Right ventricle myocardium inferior (tissue), 1 donor: ENCODE measurements at regions of chr1 and their contacts with region 1.

Region 1: DNA sequence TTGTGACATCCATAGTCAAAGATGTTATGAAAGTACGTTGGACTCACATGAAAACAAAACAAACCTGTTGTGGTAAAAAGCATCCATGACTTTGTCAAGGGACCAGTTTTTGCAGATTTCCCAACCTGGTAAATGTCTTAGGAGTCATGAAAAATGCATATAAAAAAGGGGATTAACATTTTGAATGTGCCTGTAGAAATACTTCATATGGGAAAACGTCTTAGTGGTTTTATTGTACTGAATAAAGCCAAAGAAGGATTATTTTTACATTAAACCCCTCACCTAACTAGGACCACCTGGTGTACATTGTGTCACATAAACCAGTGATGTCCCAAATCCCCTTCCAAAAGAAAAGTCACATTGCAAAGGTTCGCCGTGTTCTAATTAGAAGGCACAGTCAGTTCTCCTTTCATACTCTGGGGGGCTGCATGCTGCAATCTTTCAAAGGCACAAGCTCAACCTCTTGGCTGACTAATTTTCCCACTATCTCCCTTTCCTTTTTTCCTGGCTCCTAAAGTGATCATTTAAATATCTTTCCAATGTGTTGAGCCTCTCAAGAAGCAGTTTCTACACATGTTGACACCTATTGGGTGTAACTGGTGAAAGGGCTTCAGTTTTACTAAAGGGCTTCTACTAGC is 119.8 kb upstream of the SPAG17 start:
- DNase-seq: no peak
- ATAC-seq: peak; percentile 62

Region 2: GRCh38 chr1:118190561-118190960 is 114.3 kb before region 1 on chr1:
- intact Hi-C with region 1: no loop called
- DNase-seq: no peak
- ATAC-seq: no peak

Region 3: DNA sequence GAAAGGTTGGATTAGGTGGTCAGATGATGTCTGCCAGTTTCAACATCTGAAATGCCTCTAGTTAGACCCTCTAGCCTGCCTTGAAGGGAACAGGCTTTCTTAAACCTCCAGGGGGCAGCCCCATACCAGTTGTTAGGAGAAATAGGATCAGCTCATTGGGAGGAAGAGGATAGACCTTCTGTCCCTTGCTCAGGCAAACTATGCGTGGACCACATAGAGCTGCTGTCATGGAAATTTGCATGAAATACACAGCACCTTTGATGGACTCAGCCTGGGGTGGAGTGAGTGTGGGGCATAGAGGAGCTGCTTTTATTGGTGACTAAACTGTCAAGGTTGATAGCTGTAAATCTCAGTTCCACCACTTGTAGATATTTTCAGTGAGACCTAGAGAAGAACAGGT is 81.4 kb before region 1 on chr1:
- intact Hi-C with region 1: no loop called
- DNase-seq: no peak
- ATAC-seq: peak; percentile 71

Region 4: DNA sequence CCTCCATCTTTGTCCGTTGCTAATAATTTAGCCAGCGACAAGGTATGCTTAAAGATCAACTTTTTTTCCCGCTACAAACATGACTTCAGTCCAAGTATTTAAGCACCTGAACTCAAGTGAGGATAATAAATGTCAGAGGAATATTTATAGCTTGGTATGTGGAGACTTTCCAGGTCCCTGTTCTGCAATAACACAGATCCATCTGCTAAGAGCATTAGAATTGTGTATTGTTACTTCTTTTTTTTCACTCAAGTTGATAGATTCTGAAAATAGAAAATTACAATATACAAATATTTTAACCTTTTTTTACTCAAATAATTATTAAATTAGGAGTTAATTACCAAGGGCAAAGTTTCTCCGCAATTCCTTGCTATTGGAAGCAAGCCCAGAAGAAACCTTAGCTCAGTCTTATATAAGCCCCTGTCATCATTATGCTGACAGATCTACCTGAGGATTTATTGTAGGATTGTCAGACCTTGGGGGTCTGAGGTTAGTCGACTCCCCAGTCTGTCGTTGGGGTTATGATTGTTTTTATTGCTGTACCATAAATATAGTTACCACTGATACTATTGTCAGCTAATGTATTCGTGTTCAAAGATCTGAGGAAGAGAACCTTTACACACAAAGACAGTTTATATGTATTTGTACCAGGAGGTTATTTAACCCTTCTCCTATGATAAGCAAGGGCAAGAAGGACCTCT is 345.4 kb after region 1 on chr1:
- intact Hi-C with region 1: loop called (anchors 5 kb)
- DNase-seq: no peak
- ATAC-seq: peak; percentile 65

Region 5: GRCh38 chr1:118716782-118717181 is 411.9 kb after region 1 on chr1:
- intact Hi-C with region 1: loop called (anchors 5 kb)
- DNase-seq: no peak
- ATAC-seq: no peak